Activated T-helper 2 cell treated with anti-CD3 and anti-CD28 coated beads, Interferon-gamma antibody, Interleukin-2, Interleukin-4, amounts not matched to agents 10 μg/mL and 5 μg/mL and 100 μg/mL, durations not matched to agents 14 hours and 24 hours and 36 hours (primary cell): ENCODE measurements at regions of chr14 and their contacts with region 1.

Region 1: GRCh38 chr14:23320774-23321571 is at the start of gene PABPN1:
- DNase-seq: peak; percentile 98
- H3K4me3 Mint-ChIP-seq: peak within 1 kb of the TSS; percentile 88
- H3K27ac Mint-ChIP-seq: peak within 1 kb of the TSS; percentile 86
- H3K4me1 Mint-ChIP-seq: peaks cover 23% of the 10 kb centered on the region
- H3K27me3 Mint-ChIP-seq: no peaks in the 10 kb centered on the region
- total RNA-seq, gene PABPN1: 241 and 259 TPM in 2 replicates

Region 2: GRCh38 chr14:22872033-22872832 is 448.7 kb before region 1 on chr14:
- intact Hi-C with region 1: no loop called
- DNase-seq: peak; percentile 64
- H3K4me3 Mint-ChIP-seq: peak overlapping the region; percentile 89
- H3K27ac Mint-ChIP-seq: peak overlapping the region; percentile 80
- H3K4me1 Mint-ChIP-seq: peaks cover 19% of the 10 kb centered on the region
- H3K27me3 Mint-ChIP-seq: no peaks in the 10 kb centered on the region

Region 3: GRCh38 chr14:23227566-23227965 is 93.4 kb before region 1 on chr14:
- intact Hi-C with region 1: no loop called
- DNase-seq: no peak
- H3K4me3 Mint-ChIP-seq: no peak overlapping the region
- H3K27ac Mint-ChIP-seq: no peak overlapping the region
- H3K4me1 Mint-ChIP-seq: no peaks in the 10 kb centered on the region
- H3K27me3 Mint-ChIP-seq: peaks cover 20% of the 10 kb centered on the region

Region 4: GRCh38 chr14:23275412-23275811 is 45.6 kb before region 1 on chr14:
- intact Hi-C with region 1: no loop called
- DNase-seq: no peak
- H3K4me3 Mint-ChIP-seq: no peak overlapping the region
- H3K27ac Mint-ChIP-seq: no peak overlapping the region
- H3K4me1 Mint-ChIP-seq: no peaks in the 10 kb centered on the region
- H3K27me3 Mint-ChIP-seq: no peaks in the 10 kb centered on the region

Region 5: GRCh38 chr14:23286020-23286905 is 34.7 kb before region 1 on chr14 and contains the start of gene HOMEZ:
- intact Hi-C with region 1: loop called (anchors 1 kb)
- DNase-seq: peak; percentile 97
- H3K4me3 Mint-ChIP-seq: peak within 1 kb of the TSS; percentile 95
- H3K27ac Mint-ChIP-seq: peak within 1 kb of the TSS; percentile 93
- H3K4me1 Mint-ChIP-seq: peaks cover 23% of the 10 kb centered on the region
- H3K27me3 Mint-ChIP-seq: no peaks in the 10 kb centered on the region
- total RNA-seq, gene HOMEZ: 13.3 and 13.7 TPM in 2 replicates

Region 6: DNA sequence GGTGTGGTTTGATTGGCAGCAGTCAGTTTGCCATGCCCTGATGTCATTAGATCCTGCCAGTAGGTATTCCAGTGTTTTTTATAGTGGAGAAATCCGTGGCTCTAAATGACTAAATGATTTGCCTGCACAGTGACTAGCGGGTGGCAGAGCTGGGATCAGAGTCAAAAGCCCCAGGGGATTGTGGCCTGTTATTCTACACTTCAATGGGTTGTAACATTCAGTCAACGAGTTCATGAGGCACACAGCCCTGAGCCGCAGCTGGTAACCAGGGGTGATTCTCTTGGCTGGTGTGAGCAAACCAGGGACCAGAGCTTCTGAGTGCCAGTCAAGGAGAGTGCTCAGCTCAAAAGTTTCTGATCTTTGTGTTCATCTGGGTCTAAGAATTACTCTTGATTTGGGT is 85.3 kb after region 1 on chr14:
- intact Hi-C with region 1: no loop called
- DNase-seq: no peak
- H3K4me3 Mint-ChIP-seq: no peak overlapping the region
- H3K27ac Mint-ChIP-seq: no peak overlapping the region
- H3K4me1 Mint-ChIP-seq: no peaks in the 10 kb centered on the region
- H3K27me3 Mint-ChIP-seq: no peaks in the 10 kb centered on the region

Region 7: DNA sequence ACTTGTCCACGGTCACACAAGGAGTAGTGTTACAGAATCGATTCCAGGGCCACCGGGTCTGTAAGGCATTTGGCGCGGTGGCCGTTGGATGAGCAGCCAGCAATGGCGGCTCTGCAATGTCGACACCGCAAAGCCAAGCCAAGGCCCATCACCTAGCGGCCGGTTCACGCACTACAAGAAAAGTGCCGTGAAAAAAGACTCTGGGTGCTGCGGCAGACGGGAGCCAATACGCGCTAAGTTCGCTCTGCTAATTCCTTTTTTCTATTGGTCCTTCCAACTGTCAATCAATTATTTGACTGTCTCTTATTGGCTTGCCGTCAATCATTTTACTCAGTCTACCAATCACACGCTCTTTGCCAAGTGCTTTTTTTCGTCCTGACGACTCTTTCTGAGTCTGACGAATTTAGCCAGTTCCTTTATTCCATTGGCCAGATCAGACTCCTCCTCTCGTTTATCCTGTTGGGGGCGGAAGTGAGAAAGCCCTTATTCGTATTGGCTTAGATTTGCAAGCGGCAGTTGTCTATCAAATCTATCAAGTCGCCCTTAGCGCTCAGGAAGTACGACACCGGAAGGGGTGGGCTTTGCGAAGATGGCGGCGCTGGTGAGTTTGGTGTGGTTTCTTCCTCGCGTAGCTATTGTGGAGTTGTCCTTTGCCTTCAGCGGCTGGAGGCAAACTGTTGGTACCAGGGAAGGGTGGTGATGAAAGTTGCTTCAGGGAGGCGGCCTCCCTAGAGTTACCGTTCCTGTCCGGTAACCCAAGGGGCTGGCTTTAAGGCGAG is 148.3 kb after region 1 on chr14 and contains the start of gene NGDN:
- intact Hi-C with region 1: loop called (anchors 1 kb)
- DNase-seq: peak; percentile 91
- H3K4me3 Mint-ChIP-seq: no peak within 1 kb of the TSS
- H3K27ac Mint-ChIP-seq: peak within 1 kb of the TSS; percentile 52
- H3K4me1 Mint-ChIP-seq: peaks cover 10% of the 10 kb centered on the region
- H3K27me3 Mint-ChIP-seq: no peaks in the 10 kb centered on the region
- total RNA-seq, gene NGDN: 65.6 and 65.7 TPM in 2 replicates